Spleen (tissue), 13 donors: ENCODE measurements at regions of chr3 and their contacts with region 1.

Region 1: DNA sequence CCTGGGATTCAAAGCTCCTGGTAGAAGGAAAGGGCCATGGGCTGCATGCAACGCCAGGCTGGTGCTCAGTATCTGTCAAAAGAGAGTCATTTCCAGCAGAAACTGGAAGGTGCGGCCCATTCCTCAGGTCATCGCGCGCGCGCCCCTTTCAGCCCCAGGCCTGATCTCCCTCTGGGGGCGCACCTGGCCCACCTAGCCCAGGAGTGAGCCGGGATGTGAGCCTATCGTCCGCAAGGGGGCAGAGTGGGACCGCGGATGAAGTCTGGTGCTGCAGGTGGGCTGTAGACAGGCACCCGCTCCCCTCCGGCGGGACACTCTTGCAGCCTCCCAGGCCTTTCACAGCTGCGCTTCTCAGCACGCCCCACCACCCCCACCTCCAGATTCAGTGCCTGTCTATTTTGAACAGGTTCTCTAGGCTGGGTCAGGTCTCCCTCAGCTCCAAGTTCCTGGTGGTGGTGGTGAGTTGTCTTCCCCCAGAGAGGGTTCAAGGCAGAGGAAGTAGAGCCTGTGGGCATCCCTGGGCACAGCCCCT is 5.8 kb upstream of the RPL29 start:
- DNase-seq: peak; percentile 94
- H3K4me3 ChIP-seq: no peak overlapping the region
- H3K27ac ChIP-seq: no peak overlapping the region
- H3K4me1 ChIP-seq: peaks cover 15 to 37% (median 34%) of the 10 kb centered on the region in 6 donors
- H3K27me3 ChIP-seq: no peaks in the 10 kb centered on the region
- CTCF ChIP-seq: peak; percentile 91 to 98 (median 93)
- POLR2A ChIP-seq: no peak

Region 2: DNA sequence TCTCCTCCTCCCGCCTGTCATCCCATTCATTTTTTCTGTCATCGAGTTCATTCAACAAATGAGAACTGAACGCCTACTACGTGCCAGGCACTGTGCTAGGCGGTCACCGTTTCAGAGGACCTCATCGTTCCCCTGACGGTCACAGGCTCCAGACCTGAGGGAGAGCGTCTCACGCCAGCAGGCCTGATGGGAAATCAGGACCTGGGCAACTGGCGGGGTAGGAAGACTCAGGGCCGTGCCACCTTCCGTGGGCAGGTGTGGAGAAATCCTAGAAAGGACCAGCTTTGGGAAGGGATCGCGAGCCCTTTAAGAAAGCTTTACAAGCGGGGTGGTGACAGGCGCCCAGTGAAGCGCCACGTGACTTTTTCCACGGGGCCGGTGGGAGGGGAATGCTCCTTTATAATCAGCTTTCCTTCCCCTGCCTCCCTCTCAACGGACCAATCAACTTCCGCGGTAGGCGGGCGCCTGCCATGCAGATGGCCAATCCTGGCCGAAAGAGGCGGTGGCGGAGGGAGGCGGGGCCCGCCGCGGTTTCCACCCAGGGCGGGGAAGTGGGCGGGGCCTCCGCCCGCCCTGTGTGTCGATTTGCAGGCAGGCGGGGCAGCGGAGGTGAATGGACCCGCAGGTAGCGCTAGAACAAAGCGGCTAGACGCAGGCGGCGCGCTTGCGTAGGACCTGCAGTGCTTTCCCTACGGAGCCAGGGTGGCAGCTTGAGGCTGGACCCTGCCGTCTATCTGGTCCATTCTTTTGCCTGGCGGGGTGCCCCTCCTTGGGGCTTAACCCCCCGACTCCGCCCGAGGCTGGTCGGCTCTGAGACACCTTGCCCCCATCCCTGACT is 55.7 kb after region 1 on chr3:
- intact Hi-C with region 1: loop called (anchors 10 kb)
- DNase-seq: peak; percentile 100
- H3K4me3 ChIP-seq: peak overlapping the region; percentile 39 to 93 (median 76)
- H3K27ac ChIP-seq: peak overlapping the region; percentile 81 to 95 (median 89)
- H3K4me1 ChIP-seq: peaks cover 30 to 60% (median 52%) of the 10 kb centered on the region in 6 donors
- H3K27me3 ChIP-seq: no peaks in the 10 kb centered on the region
- CTCF ChIP-seq: peak in 4 of 11 experiments; percentile 17 to 51 (median 30)
- POLR2A ChIP-seq: peak in 1 of 3 donors; percentile 6

Region 3: DNA sequence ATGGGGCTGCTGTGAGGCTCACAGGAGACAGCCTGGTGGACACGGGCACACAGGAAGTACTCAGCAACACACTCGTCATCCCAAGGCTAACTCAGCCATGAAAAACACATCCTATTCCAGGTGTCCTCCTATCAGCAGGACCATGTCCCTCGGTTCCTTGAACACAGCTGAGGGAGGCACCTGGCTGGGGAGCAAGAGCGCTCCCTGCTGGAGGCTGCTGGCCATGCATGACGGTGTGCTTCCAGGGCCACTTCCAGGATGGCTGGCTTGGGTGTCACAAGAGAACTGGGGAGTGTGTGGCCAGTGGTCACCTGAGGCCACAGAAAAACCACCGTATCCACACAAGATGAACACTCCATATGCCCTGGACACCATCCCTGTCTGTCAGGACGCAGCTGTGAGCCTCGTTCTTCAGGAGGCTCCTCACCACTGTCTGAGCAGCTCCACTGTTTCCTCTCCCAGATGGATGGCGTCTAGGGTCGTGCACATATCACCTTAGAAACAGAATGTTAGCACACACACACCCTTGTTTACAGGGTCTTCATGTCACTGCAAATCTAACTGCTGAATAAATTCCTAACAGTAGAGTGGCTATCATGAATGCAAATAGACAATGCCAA is 121.7 kb after region 1 on chr3:
- intact Hi-C with region 1: loop called (anchors 5 kb)
- DNase-seq: peak; percentile 92
- H3K4me3 ChIP-seq: no peak overlapping the region
- H3K27ac ChIP-seq: peak overlapping the region; percentile 72 to 88 (median 84)
- H3K4me1 ChIP-seq: peaks cover 11 to 62% (median 46%) of the 10 kb centered on the region in 6 donors
- H3K27me3 ChIP-seq: no peaks in the 10 kb centered on the region
- CTCF ChIP-seq: peak; percentile 83 to 98 (median 94)
- POLR2A ChIP-seq: no peak

Region 4: DNA sequence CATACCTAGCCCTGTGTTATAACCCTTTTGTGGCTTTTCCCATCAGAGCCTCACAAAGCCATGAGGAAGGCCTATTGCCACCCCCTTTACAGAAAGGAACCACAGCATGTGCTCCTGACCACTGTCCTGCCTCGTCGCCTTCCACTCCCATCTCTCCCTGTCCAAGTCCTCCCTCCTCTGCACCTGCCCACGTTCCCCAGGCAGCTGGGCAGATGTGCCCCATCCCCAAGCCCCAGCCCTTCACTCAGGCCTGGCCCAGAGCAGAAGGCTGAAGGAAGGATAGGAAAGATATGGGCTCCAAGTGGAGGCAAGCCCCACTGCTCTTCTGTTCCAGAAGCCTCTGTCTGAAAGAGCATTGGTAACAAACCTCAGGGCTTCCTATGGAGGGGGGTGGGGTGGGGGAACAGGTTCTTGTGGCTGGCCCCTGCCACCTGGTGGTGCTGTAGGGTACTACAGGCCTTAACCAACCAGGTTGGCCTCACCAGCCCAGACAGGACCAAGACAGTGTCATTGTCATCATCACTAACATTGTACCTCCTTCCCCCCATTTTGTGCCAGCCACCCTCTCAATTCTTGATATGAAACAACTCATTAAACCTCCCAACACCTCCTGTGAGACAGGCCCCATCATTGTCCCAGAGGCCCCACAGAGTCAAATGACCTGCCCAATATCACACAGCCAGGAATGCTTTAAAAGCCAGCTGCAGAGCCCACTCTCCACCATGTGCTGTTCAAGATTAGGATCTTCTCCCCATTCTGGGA is 142.7 kb after region 1 on chr3:
- intact Hi-C with region 1: loop called (anchors 2 kb)
- DNase-seq: peak; percentile 94
- H3K4me3 ChIP-seq: no peak overlapping the region
- H3K27ac ChIP-seq: peak overlapping the region in 1 of 8 donors; percentile 26
- H3K4me1 ChIP-seq: peaks cover 0 to 11% (median 8%) of the 10 kb centered on the region in 6 donors
- H3K27me3 ChIP-seq: no peaks in the 10 kb centered on the region
- CTCF ChIP-seq: peak; percentile 93 to 98 (median 98)
- POLR2A ChIP-seq: no peak